ENCODE measurements at regions of chr20 and their contacts with region 1.

Region 1: DNA sequence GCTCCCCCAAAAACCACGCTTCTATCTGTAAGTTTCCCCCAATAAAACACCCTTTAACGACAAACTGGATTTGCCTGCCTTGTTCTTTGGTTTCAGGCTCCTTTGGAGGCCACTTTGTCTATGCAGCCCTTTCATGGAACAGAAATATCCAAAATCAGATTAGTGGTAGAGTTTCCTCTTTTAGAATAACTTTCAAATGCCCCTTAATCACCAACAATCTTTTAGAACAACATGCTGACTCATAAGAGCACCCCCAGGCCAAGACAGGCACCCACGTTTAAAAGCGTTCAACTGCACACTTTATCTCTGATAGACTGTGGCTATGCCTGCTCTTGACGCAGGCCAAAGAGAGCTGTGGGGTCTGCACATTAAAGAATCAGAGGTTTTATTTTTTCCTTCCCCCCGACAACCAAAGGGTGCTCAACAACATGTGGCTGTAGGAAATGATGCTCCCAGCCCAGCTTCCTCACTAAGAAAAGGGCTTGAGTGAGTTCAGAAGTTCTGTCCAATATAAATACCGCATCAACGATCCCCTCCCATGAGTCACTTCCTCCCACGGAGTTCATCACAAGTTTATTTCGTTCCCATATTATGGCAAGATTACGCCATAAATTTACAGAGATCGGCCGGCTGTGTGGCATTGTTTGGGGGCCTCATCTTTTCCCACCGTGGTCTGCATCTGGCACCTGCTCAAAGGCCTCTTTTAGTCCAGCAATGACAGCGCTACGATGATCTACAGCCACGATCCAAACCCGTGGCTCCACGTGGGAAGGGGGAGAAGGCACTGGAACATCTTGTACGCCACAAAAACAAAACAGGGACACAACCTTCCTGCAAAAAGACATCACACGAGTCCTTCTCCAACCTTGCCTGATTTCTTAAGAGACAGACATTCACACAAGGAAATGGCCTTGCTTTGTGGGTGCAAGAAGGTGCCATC is 88.8 kb upstream of the NFATC2 start:
- DNase-seq: peak; percentile 91 to 94 (median 92)
- H3K4me3 ChIP-seq: peak overlapping the region; percentile 7 to 62 (median 15)
- H3K4me3 Mint-ChIP-seq: peak overlapping the region; percentile 71 to 81
- H3K27ac ChIP-seq: peak overlapping the region; percentile 78 to 90
- H3K27ac Mint-ChIP-seq: peak overlapping the region; percentile 94 to 99 (median 97)
- H3K4me1 ChIP-seq: peaks cover 34 to 43% of the 10 kb centered on the region in 2 donors
- H3K4me1 Mint-ChIP-seq: peaks cover 62% of the 10 kb centered on the region
- H3K27me3 ChIP-seq: peaks cover 0 to 7% of the 10 kb centered on the region in 2 donors
- H3K27me3 Mint-ChIP-seq: peaks cover 38 to 54% (median 42%) of the 10 kb centered on the region in 3 donors
- CTCF ChIP-seq: no peak

Region 2: GRCh38 chr20:51554538-51555165 is 76.6 kb before region 1 on chr20:
- intact Hi-C with region 1: no loop called
- DNase-seq: no peak
- H3K4me3 ChIP-seq: no peak overlapping the region
- H3K4me3 Mint-ChIP-seq: no peak overlapping the region
- H3K27ac ChIP-seq: no peak overlapping the region
- H3K27ac Mint-ChIP-seq: no peak overlapping the region
- H3K4me1 ChIP-seq: no peaks in the 10 kb centered on the region
- H3K4me1 Mint-ChIP-seq: no peaks in the 10 kb centered on the region
- H3K27me3 ChIP-seq: peaks cover under 1 to 15% of the 10 kb centered on the region in 2 donors
- H3K27me3 Mint-ChIP-seq: peaks cover 6 to 22% (median 13%) of the 10 kb centered on the region in 3 donors
- CTCF ChIP-seq: no peak

Region 3: DNA sequence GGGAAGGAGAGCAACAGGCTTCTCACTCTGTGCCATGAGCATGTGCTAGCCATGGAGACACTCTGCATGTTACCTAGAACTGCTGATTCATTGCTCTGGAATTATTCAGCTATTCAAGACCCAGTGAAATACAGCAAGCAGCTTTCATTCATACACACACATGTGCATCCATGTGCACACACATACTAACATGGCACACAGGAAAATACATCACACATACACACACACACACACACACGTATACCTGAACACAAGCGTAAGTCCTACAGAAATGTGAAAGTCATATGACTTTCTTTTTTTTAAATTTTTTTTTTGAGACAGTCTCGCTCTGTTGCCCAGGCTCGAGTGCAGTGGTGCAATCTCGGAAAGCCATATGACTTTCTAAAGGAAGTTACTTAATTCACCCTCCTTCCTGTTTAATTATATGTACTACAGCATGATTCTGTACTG is 19.4 kb after region 1 on chr20:
- intact Hi-C with region 1: loop called in 1 of 2 experiments (anchors 2 kb)
- DNase-seq: peak; percentile 75 to 91 (median 86)
- H3K4me3 ChIP-seq: peak overlapping the region; percentile 13 to 58 (median 34)
- H3K4me3 Mint-ChIP-seq: peak overlapping the region; percentile 10 to 71
- H3K27ac ChIP-seq: peak overlapping the region; percentile 54 to 94
- H3K27ac Mint-ChIP-seq: peak overlapping the region; percentile 94 to 97 (median 95)
- H3K4me1 ChIP-seq: peaks cover 29 to 30% of the 10 kb centered on the region in 2 donors
- H3K4me1 Mint-ChIP-seq: peaks cover 32% of the 10 kb centered on the region
- H3K27me3 ChIP-seq: no peaks in the 10 kb centered on the region
- H3K27me3 Mint-ChIP-seq: peaks cover 0 to 2% (median 0%) of the 10 kb centered on the region in 3 donors
- CTCF ChIP-seq: no peak

Measured in CD14-positive monocyte (primary cell).